Gastrocnemius medialis (tissue), 4 donors: ENCODE measurements at regions of chr1 and their contacts with region 1.

Region 1: DNA sequence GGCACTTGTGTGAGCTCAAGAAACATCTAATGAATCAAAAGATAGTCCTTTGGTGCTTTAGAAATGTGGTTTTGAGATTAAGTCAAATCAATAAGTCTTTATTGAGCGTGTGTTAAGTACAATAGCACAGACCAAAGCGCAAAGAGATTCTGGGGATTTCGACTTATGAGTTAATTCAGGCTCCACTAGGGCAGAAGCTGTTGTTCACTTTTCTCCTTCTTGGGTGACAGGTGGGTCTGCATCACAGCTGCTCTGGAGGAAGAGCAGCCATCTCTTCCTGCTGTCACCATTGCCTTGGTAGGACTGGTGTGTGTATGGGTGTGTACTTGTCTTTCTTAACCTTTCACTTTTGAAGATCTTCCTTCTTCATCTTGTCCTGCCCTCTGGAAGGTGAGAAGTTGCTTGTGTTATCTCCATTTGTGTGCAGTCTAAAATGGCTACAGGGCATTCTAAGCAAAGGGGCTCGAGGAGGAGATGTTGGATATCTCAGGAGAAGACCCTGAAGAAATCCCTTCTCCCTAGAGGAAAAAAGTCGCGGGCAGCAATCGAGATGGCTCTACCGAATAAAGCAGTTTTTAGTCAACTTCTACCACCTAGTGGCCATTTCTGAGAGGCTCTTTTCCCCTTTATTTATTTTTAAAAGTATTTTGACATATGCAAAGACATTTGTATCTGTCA is 22.9 kb upstream of the DISC1 start:
- DNase-seq: no peak
- ATAC-seq: peak; percentile 64 to 73
- H3K4me3 ChIP-seq: peak overlapping the region; percentile 44 to 58 (median 52)
- H3K27ac ChIP-seq: peak overlapping the region; percentile 38 to 47 (median 44)
- H3K4me1 ChIP-seq: peaks cover 0 to 17% of the 10 kb centered on the region in 2 donors
- H3K27me3 ChIP-seq: no peaks in the 10 kb centered on the region
- CTCF ChIP-seq: peak; percentile 56 to 82 (median 71)
- POLR2A ChIP-seq: no peak

Region 2: DNA sequence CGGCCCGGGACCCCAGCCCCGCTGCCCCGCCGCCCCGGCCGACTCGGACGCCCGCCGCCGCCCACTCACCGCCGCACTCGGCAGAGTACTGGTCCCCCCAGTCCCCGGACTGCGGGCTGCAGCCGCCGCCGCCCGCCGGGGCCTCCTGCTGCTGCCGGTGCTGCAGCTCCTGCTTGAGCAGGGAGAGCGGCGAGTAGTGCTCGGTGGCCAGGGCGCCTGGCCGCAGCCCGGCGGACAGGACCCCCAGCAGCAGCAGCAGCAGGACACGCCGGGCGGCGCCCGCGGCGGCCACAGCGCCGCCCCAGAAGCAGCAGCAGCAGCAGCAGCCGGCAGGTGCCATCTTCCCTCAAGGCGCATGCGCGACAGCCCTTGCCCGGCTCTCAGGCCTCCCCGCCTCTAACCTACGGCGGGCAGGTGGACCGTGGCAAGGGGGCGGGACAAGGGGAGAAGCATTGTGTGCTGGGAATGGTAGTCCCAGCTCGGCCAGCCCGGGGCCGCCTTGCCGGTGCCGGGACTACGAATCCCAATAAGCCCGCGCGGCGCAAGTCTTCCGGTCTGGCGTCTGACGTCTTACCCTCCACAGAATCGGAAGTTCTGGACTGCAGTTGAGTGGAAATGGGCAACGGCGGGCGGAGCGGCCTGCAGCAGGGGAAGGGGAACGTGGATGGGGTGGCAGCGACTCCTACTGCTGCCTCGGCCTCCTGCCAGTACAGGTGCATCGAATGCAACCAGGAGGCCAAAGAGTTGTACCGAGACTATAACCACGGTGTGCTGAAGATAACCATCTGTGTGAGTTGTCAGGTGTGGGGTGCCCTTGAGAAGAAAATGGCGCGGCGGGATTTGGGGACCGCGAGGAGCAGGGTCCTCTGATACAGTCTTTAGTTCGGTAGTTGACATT is 625.0 kb before region 1 on chr1 and contains the starts of genes ARV1 and TTC13:
- in situ Hi-C with region 1: loop called in 2 of 4 experiments (anchors 25 kb)
- intact Hi-C with region 1: no loop called
- DNase-seq: peak; percentile 98
- ATAC-seq: peak; percentile 96 to 97
- H3K4me3 ChIP-seq: peak within 1 kb of the TSS; percentile 84 to 96 (median 88)
- H3K27ac ChIP-seq: peak within 1 kb of the TSS; percentile 71 to 82 (median 78)
- H3K4me1 ChIP-seq: peaks cover 17 to 24% of the 10 kb centered on the region in 2 donors
- H3K27me3 ChIP-seq: no peaks in the 10 kb centered on the region
- CTCF ChIP-seq: peak in 4 of 5 experiments; percentile 8 to 29 (median 23)
- POLR2A ChIP-seq: peak; percentile 48 to 56
- total RNA-seq, gene ARV1: 7.9 to 21.3 (median 10.5) TPM
- total RNA-seq, gene TTC13: 16.0 to 36.0 (median 22.7) TPM

Region 3: DNA sequence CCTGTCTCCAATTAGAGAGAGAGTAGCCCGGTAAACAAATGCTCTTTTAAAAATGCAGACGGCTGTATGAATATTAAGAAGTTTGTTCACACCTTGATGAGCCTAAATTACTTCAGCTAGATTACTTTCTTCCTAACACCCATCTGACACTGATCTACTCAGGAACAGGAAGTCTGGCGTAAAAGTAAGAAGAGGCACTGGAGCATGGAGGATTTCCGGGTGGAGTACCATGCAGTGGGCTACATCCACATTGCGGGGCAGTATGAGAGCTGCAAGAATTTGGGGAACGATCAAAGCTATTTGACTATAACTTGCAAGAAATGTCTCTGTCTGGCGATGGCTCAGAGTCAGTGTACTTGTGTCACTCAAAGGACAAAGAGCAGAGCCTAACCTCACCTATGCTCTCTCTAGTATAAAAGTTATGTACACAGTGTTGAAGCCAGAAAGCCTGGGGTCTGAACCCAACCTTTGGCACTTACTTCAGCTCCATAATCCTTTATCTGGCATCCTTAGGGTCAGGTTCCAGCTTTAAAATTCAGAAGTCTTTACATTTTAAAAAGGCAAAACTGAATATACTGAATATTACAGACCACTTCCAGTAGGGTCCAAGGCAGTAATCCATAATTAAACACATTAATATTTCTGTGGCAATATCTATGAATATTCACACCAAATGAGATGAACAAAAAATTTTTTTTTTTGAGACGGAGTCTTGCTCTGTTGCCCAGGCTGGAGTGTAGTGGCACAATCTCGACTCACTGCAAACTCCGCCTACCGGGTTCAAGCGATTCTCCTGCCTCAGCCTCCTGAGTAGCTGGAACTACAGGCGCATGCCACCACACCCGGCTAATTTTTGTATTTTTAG is 370.6 kb before region 1 on chr1:
- in situ Hi-C with region 1: loop called in 1 of 4 experiments (anchors 10 kb)
- intact Hi-C with region 1: no loop called
- DNase-seq: no peak
- ATAC-seq: no peak
- H3K4me3 ChIP-seq: no peak overlapping the region
- H3K27ac ChIP-seq: no peak overlapping the region
- H3K4me1 ChIP-seq: peaks cover 30 to 39% of the 10 kb centered on the region in 2 donors
- H3K27me3 ChIP-seq: no peaks in the 10 kb centered on the region
- CTCF ChIP-seq: no peak
- POLR2A ChIP-seq: no peak

Region 4: DNA sequence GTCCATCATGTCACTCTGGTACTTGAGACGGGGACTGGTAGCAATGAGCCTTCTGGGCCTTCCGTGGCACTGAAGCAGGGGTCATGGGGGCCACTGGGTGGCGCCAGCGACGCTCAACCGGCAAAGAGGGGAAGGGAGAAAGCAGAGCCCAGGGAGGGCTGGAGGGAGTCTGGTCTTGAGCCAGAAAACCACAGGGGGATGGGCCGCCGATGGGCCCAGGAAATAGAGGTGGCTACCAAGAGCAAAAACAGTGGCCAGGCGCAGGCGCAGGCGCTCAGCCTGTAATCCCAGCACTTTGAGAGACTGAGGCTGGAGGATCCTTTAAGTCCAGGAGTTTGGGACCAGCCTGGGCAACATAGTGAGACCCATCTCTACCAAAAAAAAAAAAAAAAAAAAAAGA is 287.9 kb before region 1 on chr1:
- in situ Hi-C with region 1: no loop called
- intact Hi-C with region 1: loop called (anchors 2 kb)
- DNase-seq: no peak
- ATAC-seq: peak; percentile 17 to 36
- H3K4me3 ChIP-seq: no peak overlapping the region
- H3K27ac ChIP-seq: no peak overlapping the region
- H3K4me1 ChIP-seq: no peaks in the 10 kb centered on the region
- H3K27me3 ChIP-seq: no peaks in the 10 kb centered on the region
- CTCF ChIP-seq: peak; percentile 25 to 64 (median 49)
- POLR2A ChIP-seq: no peak